Activated naive CD4-positive, alpha-beta T cell treated with anti-CD3 and anti-CD28 coated beads for 36 hours (primary cell): ENCODE measurements at regions of chr11 and their contacts with region 1.

Region 1: GRCh38 chr11:4539603-4540219 is 5.3 kb upstream of the OR52M1 start:
- DNase-seq: peak; percentile 79
- H3K4me3 Mint-ChIP-seq: no peak overlapping the region
- H3K27ac Mint-ChIP-seq: no peak overlapping the region
- H3K4me1 Mint-ChIP-seq: no peaks in the 10 kb centered on the region
- H3K27me3 Mint-ChIP-seq: no peaks in the 10 kb centered on the region

Region 2: GRCh38 chr11:4181782-4182721 is 357.7 kb before region 1 on chr11:
- CTCF ChIA-PET with region 1: interaction called, 95 read pairs
- intact Hi-C with region 1: loop called (anchors 1 kb)
- DNase-seq: peak; percentile 69
- H3K4me3 Mint-ChIP-seq: no peak overlapping the region
- H3K27ac Mint-ChIP-seq: no peak overlapping the region
- H3K4me1 Mint-ChIP-seq: no peaks in the 10 kb centered on the region
- H3K27me3 Mint-ChIP-seq: peaks cover 2% of the 10 kb centered on the region

Region 3: DNA sequence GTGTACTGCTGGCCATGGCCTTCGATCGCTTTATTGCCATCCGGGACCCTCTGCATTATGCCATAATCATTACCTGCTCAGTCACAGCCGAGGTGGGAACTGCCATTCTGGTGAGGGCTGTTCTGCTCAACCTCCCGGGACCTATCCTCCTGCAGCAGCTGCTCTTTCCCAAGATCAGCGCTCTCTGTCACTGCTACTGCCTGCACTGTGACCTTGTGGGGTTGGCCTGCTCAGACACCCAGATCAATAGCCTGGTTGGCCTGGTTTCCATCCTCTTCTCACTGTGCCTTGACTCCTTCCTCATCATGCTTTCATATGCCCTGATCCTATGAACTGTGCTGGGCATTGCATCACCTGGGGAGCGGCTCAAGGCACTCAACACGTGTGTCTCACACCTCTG is 121.3 kb before region 1 on chr11:
- CTCF ChIA-PET with region 1: no interaction called
- intact Hi-C with region 1: loop called (anchors 5 kb)
- DNase-seq: no peak
- H3K4me3 Mint-ChIP-seq: no peak overlapping the region
- H3K27ac Mint-ChIP-seq: no peak overlapping the region
- H3K4me1 Mint-ChIP-seq: no peaks in the 10 kb centered on the region
- H3K27me3 Mint-ChIP-seq: no peaks in the 10 kb centered on the region

Region 4: GRCh38 chr11:4466871-4467442 is 72.8 kb before region 1 on chr11:
- CTCF ChIA-PET with region 1: no interaction called
- intact Hi-C with region 1: no loop called
- DNase-seq: no peak
- H3K4me3 Mint-ChIP-seq: no peak overlapping the region
- H3K27ac Mint-ChIP-seq: no peak overlapping the region
- H3K4me1 Mint-ChIP-seq: no peaks in the 10 kb centered on the region
- H3K27me3 Mint-ChIP-seq: peaks cover 12% of the 10 kb centered on the region

Region 5: GRCh38 chr11:4713241-4713640 is 173.5 kb after region 1 on chr11:
- CTCF ChIA-PET with region 1: no interaction called
- intact Hi-C with region 1: no loop called
- DNase-seq: no peak
- H3K4me3 Mint-ChIP-seq: no peak overlapping the region
- H3K27ac Mint-ChIP-seq: no peak overlapping the region
- H3K4me1 Mint-ChIP-seq: no peaks in the 10 kb centered on the region
- H3K27me3 Mint-ChIP-seq: peaks cover 15% of the 10 kb centered on the region